Heart left ventricle (tissue), 16 donors: ENCODE measurements at regions of chr11 and their contacts with region 1.

Region 1: DNA sequence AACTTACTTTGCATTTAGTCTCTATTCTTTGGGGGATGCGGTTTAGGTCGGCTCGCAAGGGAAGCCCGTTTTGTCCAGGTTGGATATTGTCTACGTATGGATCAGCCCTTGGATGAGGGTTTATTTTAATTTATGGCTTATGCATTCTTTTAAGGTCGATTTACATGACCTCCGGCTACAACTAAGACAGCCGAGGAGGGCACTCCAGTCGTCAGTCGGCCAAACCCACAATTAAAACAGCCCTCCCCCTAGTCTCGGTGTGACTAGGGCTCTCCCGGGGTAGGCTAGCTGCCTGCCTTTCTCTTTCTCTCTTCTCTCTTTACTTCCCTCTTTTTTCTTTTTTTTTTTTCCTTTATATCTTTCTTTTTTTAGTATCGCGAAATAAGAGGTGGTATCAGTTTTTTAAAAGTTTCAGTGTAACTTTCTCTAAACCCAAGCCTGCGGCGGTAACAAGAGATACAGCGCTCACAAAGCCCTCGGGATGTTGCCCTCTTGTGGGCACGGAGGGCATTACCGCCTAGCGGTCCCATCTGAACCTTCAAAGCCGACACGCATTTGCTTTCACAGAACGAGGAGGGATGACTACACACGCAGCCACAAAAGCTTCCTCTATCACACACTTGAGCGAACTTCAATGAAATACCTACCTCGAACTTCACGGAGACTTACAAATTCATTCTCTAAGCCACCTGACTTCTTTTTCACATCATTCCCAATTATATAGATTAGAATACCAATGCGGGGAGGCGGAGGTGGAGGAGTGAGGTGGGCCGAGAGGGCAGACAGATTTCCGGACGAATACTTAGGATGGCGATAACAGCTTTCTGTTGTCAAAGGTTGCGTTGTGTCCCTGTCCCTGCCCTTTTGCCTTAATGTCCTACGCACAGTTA is 132.3 kb upstream of the C11orf58 start:
- DNase-seq: peak; percentile 87 to 92 (median 90)
- ATAC-seq: peak; percentile 43 to 66 (median 56)
- H3K4me3 ChIP-seq: peak overlapping the region; percentile 69 to 93 (median 84)
- H3K27ac ChIP-seq: peak overlapping the region; percentile 85 to 100 (median 97)
- H3K4me1 ChIP-seq: peaks cover 0 to 38% (median 9%) of the 10 kb centered on the region in 12 donors
- H3K27me3 ChIP-seq: peaks cover 0 to 79% (median 3%) of the 10 kb centered on the region in 9 donors
- CTCF ChIP-seq: peak; percentile 95 to 99 (median 98)
- POLR2A ChIP-seq: peak in 1 of 2 donors; percentile 47

Region 2: DNA sequence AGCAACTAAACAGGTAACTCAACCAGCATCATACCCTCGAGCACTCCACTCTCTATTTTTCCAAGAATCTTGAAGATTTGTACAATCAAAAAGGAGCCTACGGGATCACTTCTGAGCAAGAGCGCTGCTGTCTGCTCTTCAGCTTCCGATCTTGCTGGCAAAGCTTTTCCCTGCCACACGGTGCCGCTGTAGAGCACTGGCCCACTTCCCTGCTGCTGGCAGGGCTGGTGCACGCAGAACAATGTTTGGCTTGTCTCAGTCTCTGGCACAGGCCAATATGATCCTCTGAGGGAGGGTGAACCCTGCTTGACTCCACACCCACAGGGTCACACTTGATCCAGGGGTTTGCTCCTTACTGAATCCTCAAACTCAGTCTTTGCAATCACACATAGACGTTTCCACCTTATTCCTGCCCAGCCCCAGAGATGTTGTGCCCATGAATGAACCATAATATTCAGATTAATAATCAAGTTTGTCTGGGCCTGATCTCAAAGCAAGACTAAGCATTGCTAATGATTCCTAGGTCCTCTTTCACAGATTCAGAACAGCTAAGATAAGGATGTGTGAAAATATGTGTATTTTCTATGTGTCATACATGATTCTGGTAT is 786.4 kb before region 1 on chr11:
- intact Hi-C with region 1: loop called in 6 of 10 experiments (anchors 5 to 10 kb)
- DNase-seq: peak; percentile 76 to 88 (median 81)
- ATAC-seq: peak; percentile 85 to 93 (median 88)
- H3K4me3 ChIP-seq: no peak overlapping the region
- H3K27ac ChIP-seq: peak overlapping the region in 3 of 12 donors; percentile 17 to 55 (median 52)
- H3K4me1 ChIP-seq: peaks cover 0 to 53% (median 45%) of the 10 kb centered on the region in 12 donors
- H3K27me3 ChIP-seq: no peaks in the 10 kb centered on the region
- CTCF ChIP-seq: peak; percentile 85 to 96 (median 88)
- POLR2A ChIP-seq: no peak

Region 3: DNA sequence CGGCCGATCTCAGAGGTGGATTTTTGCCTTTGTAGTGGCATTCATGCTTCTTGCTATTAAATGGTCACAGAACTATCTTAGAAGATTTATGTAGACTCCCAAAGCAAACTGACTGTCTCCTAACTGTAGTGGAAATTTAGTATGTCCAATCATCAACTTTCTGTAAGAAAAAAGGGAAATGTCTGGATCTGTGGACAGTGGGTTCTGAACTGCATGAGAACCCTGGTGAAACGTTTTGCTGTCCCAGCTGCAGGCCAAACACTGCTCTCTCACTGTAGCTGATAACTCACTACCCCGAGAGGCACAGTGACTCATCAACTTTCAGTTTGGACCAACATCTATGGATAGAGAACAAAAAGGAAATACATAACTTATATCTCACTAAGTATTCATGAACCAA is 636.9 kb before region 1 on chr11:
- intact Hi-C with region 1: loop called in 3 of 10 experiments (anchors 5 to 10 kb)
- DNase-seq: peak in 4 of 5 donors; percentile 64 to 79 (median 74)
- ATAC-seq: peak; percentile 85 to 92 (median 90)
- H3K4me3 ChIP-seq: peak overlapping the region in 7 of 12 donors; percentile 2 to 35 (median 16)
- H3K27ac ChIP-seq: peak overlapping the region; percentile 78 to 92 (median 86)
- H3K4me1 ChIP-seq: peaks cover 5 to 60% (median 35%) of the 10 kb centered on the region in 12 donors
- H3K27me3 ChIP-seq: no peaks in the 10 kb centered on the region
- CTCF ChIP-seq: no peak
- POLR2A ChIP-seq: peak in 1 of 2 donors; percentile 41

Region 4: GRCh38 chr11:16226245-16226644 is 379.9 kb before region 1 on chr11:
- intact Hi-C with region 1: loop called in 1 of 10 experiments (anchors 5 kb)
- DNase-seq: peak in 4 of 5 donors; percentile 46 to 79 (median 59)
- ATAC-seq: peak; percentile 80 to 98 (median 85)
- H3K4me3 ChIP-seq: no peak overlapping the region
- H3K27ac ChIP-seq: peak overlapping the region in 1 of 12 donors; percentile 31
- H3K4me1 ChIP-seq: peaks cover 0 to 16% (median 2%) of the 10 kb centered on the region in 12 donors
- H3K27me3 ChIP-seq: no peaks in the 10 kb centered on the region
- CTCF ChIP-seq: no peak
- POLR2A ChIP-seq: no peak

Region 5: GRCh38 chr11:16346975-16347374 is 259.2 kb before region 1 on chr11:
- intact Hi-C with region 1: loop called in 2 of 10 experiments (anchors 5 to 10 kb)
- DNase-seq: no peak
- ATAC-seq: no peak
- H3K4me3 ChIP-seq: no peak overlapping the region
- H3K27ac ChIP-seq: peak overlapping the region in 2 of 12 donors; percentile 0 to 17
- H3K4me1 ChIP-seq: peaks cover 0 to 35% (median 11%) of the 10 kb centered on the region in 12 donors
- H3K27me3 ChIP-seq: no peaks in the 10 kb centered on the region
- CTCF ChIP-seq: no peak
- POLR2A ChIP-seq: no peak

Region 6: GRCh38 chr11:16469968-16470367 is 136.2 kb before region 1 on chr11:
- intact Hi-C with region 1: loop called in 1 of 10 experiments (anchors 10 kb)
- DNase-seq: no peak
- ATAC-seq: no peak
- H3K4me3 ChIP-seq: no peak overlapping the region
- H3K27ac ChIP-seq: peak overlapping the region in 2 of 12 donors; percentile 7 to 21
- H3K4me1 ChIP-seq: peaks cover 0 to 35% (median 11%) of the 10 kb centered on the region in 12 donors
- H3K27me3 ChIP-seq: no peaks in the 10 kb centered on the region
- CTCF ChIP-seq: no peak
- POLR2A ChIP-seq: no peak

Region 7: DNA sequence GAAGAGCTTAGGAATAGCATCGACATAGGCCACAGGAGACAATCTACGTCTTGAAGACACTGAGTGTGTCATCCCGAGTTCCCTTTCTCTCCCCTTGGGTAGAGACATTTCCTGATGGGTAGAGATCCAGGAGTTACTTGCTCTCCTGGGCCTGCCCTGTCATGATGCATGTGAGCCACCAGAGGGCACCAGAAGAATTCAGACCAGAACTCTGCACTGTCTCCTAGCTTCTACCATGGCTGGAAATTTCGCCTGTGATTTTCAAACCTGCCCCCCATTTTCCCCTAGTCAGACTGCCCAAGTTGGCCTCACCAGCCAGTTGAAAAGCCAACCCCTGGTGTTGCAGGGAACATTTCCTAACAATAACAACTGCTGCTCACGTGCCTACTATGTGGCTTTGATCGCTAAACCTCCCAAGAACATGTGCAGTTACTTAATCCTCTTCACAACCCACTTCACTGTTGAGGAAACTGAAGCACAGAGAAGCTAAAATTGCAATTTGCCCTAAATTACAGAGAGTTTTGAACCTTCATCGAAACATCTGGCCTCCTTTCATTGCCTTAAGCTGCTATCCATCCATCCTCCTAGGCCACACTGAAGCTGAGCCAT is 179.5 kb after region 1 on chr11:
- intact Hi-C with region 1: no loop called
- DNase-seq: peak in 4 of 5 donors; percentile 68 to 75 (median 71)
- ATAC-seq: peak; percentile 33 to 77 (median 72)
- H3K4me3 ChIP-seq: no peak overlapping the region
- H3K27ac ChIP-seq: peak overlapping the region in 5 of 12 donors; percentile 28 to 68 (median 46)
- H3K4me1 ChIP-seq: peaks cover 0 to 71% (median 35%) of the 10 kb centered on the region in 12 donors
- H3K27me3 ChIP-seq: no peaks in the 10 kb centered on the region
- CTCF ChIP-seq: peak; percentile 80 to 97 (median 88)
- POLR2A ChIP-seq: no peak